ENCODE measurements at regions of chr1 and their contacts with region 1.

Region 1: GRCh38 chr1:225677350-225678124 is 24.6 kb upstream of the ENAH start:
- DNase-seq: no peak
- H3K4me3 ChIP-seq: no peak overlapping the region
- H3K27ac ChIP-seq: no peak overlapping the region
- H3K4me1 ChIP-seq: no peaks in the 10 kb centered on the region
- H3K27me3 ChIP-seq: no peaks in the 10 kb centered on the region
- CTCF ChIP-seq: no peak

Region 2: DNA sequence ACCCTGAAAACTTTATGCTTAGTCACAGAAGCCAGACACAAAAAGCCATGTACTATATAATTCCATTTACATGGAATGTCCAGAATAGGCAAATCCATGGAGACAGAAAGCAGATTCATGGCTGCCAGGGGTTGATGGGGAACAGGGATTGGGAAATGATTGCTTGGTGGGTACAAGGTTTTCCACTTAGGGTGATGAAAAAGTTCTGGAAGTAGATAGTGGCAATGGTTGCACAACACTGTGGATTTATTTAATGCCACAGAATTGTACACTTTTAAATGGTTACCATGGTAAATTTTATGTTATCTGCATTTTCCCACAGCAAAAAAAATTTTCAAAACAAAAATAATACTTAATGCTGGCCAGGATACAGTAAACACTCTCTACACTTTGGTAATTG is 65.2 kb before region 1 on chr1:
- CTCF ChIA-PET with region 1: no interaction called
- POLR2A ChIA-PET with region 1: no interaction called
- intact Hi-C with region 1: no loop called
- DNase-seq: no peak
- H3K4me3 ChIP-seq: no peak overlapping the region
- H3K27ac ChIP-seq: no peak overlapping the region
- H3K4me1 ChIP-seq: peaks cover 17% of the 10 kb centered on the region
- H3K27me3 ChIP-seq: no peaks in the 10 kb centered on the region
- CTCF ChIP-seq: no peak

Region 3: GRCh38 chr1:225658041-225658440 is 19.5 kb before region 1 on chr1:
- CTCF ChIA-PET with region 1: no interaction called
- POLR2A ChIA-PET with region 1: interaction called, 11 read pairs
- intact Hi-C with region 1: no loop called
- DNase-seq: no peak
- H3K4me3 ChIP-seq: no peak overlapping the region
- H3K27ac ChIP-seq: peak overlapping the region; percentile 72
- H3K4me1 ChIP-seq: peaks cover 29% of the 10 kb centered on the region
- H3K27me3 ChIP-seq: no peaks in the 10 kb centered on the region
- CTCF ChIP-seq: no peak

Measured in A673 (cell line).